GM12878 (cell line): ENCODE measurements at regions of chr22 and their contacts with region 1.

Region 1: GRCh38 chr22:39343259-39344048 is 6.3 kb upstream of the SYNGR1 start:
- DNase-seq: peak; percentile 36
- ATAC-seq: peak; percentile 95
- H3K4me3 ChIP-seq: no peak overlapping the region
- H3K27ac ChIP-seq: no peak overlapping the region
- H3K4me1 ChIP-seq: no peaks in the 10 kb centered on the region
- H3K27me3 ChIP-seq: peaks cover 0 to 1% of the 10 kb centered on the region in 2 experiments; a peak in 2 of 4 replicates
- CTCF ChIP-seq: peak; percentile 77 to 89 (median 80)
- EP300 ChIP-seq: no peak
- POLR2A ChIP-seq: no peak
- RAD21 ChIP-seq: peak; percentile 72

Region 2: DNA sequence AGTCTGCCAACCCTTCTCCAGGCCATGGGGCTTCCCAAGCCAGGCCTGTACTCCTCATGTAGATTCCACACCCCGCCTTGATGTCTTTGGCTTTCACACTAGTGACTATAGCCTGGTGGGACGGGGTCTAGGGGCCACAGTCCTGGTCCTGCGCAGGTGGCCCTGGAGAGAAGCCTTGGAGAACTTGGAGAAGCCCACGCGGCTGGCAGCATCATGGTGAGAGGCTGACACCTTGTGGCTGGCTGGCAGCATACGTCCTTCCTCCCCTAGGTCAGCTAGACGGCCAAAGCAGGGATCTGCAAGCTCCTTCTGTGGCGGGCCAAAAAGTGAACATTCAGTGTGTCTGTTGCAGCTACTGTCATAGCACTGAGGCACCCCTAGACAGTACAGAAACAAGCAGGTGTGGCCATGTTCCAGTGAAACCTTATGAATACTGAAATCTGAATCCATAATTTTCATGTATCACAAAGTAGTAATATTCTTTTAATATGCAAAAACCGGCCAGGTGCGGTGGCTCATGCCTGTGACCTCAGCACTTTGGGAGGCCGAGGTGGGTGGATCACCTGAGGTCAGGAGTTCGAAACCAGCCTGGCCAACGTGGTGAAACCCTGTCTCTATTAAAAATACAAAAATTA is 693.3 kb after region 1 on chr22:
- CTCF ChIA-PET with region 1: no interaction called
- POLR2A ChIA-PET with region 1: no interaction called
- RAD21 ChIA-PET with region 1: no interaction called
- SMC1A ChIA-PET with region 1: no interaction called
- in situ Hi-C with region 1: loop called (anchors 10 kb)
- intact Hi-C with region 1: no loop called
- DNase-seq: no peak
- ATAC-seq: peak; percentile 97
- H3K4me3 ChIP-seq: no peak overlapping the region
- H3K27ac ChIP-seq: no peak overlapping the region
- H3K4me1 ChIP-seq: no peaks in the 10 kb centered on the region
- H3K27me3 ChIP-seq: peaks cover 6 to 8% of the 10 kb centered on the region in 2 experiments
- CTCF ChIP-seq: peak; percentile 77 to 91 (median 88)
- EP300 ChIP-seq: no peak
- POLR2A ChIP-seq: no peak
- RAD21 ChIP-seq: peak; percentile 86